Uterus (tissue), 4 donors: ENCODE measurements at regions of chr2 and their contacts with region 1.

Region 1: GRCh38 chr2:159118115-159118858 is 149.8 kb downstream of the TANC1 start:
- DNase-seq: peak; percentile 87 to 88
- H3K4me3 ChIP-seq: no peak overlapping the region
- H3K27ac ChIP-seq: peak overlapping the region; percentile 33 to 46
- H3K4me1 ChIP-seq: peaks cover 4% of the 10 kb centered on the region in 2 donors
- H3K27me3 ChIP-seq: no peaks in the 10 kb centered on the region
- CTCF ChIP-seq: peak; percentile 86 to 89 (median 86)
- POLR2A ChIP-seq: no peak

Region 2: DNA sequence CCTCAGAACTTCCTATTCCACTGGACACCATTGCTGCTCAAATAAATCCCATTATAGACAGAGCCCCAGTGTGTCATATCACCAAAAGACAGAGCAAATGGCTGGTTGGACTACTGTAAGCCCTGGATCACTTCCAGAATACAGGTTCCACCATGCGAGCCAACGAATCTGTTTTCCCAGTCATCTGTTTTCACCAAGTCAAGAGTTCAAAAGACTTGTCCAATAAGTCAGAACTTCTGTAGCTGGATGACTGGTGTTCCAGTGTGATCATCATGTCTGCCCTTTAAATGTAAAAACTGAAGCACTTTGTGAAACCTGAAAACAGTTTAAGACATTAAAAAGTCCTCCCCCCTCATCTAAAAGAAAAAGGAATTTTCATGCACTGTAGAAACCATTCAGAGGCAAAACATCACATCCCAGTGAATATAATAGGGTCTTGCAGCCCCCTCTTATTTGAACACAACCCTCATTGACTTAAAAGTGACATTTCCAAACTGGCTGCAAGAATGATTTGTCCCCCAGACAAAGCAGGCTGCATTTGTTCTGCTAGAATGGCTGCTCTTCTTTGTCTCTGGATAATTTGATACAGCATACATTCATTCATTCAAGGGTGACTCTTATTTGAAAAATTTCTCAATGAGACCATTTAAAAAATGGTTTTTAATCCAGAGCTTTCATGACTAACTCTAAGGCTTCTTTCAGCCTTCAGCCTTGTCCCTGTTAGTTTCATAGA is 214.4 kb before region 1 on chr2:
- intact Hi-C with region 1: loop called (anchors 5 kb)
- DNase-seq: no peak
- H3K4me3 ChIP-seq: no peak overlapping the region
- H3K27ac ChIP-seq: no peak overlapping the region
- H3K4me1 ChIP-seq: no peaks in the 10 kb centered on the region
- H3K27me3 ChIP-seq: no peaks in the 10 kb centered on the region
- CTCF ChIP-seq: no peak
- POLR2A ChIP-seq: no peak

Region 3: DNA sequence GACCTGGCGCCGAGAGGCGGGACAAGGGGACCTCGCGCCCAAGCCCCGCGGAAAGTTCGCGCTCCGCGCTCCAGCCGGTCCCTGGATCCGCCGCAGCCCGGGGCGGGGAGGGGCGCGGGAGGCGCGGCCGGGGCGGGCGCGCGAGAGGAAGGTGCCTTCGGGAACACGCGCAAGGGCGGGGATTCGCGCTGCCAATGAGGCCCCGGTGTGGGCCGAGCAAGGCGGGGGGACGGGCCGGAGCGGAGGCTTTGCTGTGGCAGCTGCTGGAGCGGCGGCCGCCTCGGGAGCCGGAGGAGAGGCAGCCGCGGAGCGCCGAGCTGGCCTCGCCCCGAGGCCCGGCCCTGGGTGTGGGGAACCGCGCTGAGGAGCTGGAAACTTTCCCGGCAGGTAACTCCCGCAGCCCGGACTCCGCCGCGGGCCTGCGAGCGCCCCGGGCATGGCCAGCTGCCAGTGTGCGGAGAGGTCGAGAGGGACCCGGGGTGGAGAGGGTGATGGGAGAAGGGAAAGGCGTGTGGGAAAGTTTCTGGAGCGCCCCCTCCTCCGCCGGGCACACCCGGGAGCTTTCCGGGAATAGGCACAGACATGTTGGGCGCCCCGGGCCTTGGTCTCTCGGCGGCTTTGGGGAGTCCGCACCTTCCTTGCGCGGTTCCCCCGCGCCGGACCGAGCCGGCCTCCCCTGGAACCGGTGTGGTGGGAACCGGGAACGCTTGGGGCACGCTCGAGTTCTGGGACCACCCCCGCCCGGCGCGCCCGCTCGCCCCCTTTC is 149.7 kb before region 1 on chr2 and contains the start of gene TANC1:
- intact Hi-C with region 1: loop called (anchors 10 kb)
- DNase-seq: peak; percentile 94 to 95
- H3K4me3 ChIP-seq: peak within 1 kb of the TSS; percentile 62 to 86
- H3K27ac ChIP-seq: peak within 1 kb of the TSS; percentile 96 to 98
- H3K4me1 ChIP-seq: no peaks in the 10 kb centered on the region
- H3K27me3 ChIP-seq: no peaks in the 10 kb centered on the region
- CTCF ChIP-seq: peak in 2 of 4 experiments; percentile 3 to 4
- POLR2A ChIP-seq: peak; percentile 97
- total RNA-seq, gene TANC1: 34.7 to 92.7 (median 67.4) TPM

Region 4: DNA sequence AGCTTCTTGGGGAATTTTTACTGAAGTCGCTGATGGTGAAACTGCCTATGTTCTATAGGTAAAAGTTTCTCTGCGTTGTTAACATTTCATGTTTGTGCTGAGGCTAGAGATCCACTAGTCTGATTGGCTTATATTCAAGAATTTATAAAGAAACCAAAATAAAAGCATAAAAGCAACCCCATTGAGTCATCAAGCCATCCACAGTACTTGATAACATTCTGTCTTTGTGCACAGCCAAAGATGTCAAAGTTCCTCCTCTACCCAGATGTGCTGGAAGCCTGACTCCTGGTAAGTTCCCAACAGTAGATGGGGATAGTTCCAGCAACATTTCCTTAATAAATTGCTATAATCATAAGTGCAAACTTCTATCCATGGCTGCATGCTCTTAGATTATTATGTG is 42.0 kb before region 1 on chr2:
- intact Hi-C with region 1: no loop called
- DNase-seq: no peak
- H3K4me3 ChIP-seq: no peak overlapping the region
- H3K27ac ChIP-seq: peak overlapping the region; percentile 21 to 50
- H3K4me1 ChIP-seq: peaks cover 0 to 7% of the 10 kb centered on the region in 2 donors
- H3K27me3 ChIP-seq: no peaks in the 10 kb centered on the region
- CTCF ChIP-seq: no peak
- POLR2A ChIP-seq: no peak